Left colon (tissue), 2 donors: ENCODE measurements at regions of chr4 and their contacts with region 1.

Region 1: GRCh38 chr4:153083447-153083947 is 120.7 kb upstream of the TRIM2 start:
- DNase-seq: peak; percentile 63 to 66
- ATAC-seq: peak; percentile 96

Region 2: GRCh38 chr4:152849350-152849749 is 234.1 kb before region 1 on chr4:
- intact Hi-C with region 1: loop called in 1 of 2 experiments (anchors 5 kb)
- DNase-seq: no peak
- ATAC-seq: no peak

Region 3: DNA sequence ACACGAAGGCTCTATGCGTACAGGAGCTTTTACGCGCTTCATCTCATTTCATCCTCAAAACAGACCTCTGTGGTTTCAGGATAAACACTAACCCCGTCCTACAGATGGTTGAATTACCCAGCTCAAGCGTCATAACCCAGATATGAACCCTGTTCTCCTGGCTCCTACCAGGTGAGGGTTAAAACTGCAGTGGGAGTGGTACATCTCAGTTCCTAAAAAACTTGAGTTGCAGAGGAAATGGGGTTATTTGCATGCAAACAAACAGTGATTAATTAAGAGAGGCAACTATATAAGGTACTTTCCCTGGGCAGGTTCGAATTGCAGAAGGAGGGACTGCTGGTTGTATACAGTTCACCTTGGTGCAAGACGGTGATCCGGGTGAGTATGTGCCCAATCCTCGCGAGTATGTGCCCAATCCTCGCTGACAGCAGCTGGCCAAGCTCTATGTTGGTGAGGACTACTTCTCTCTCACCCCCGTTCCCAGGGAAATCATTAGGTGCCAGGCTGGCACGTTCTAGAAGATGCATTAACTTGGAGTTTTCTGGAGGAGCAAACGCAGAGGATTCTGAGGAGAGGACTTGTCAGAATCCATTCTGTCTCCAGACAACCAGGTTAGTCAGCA is 74.8 kb before region 1 on chr4:
- intact Hi-C with region 1: no loop called
- DNase-seq: no peak
- ATAC-seq: no peak

Region 4: GRCh38 chr4:153127760-153128494 is 44.4 kb after region 1 on chr4:
- intact Hi-C with region 1: loop called (anchors 2 to 5 kb)
- DNase-seq: peak; percentile 58 to 89
- ATAC-seq: peak; percentile 87